ENCODE measurements at regions of chr11 and their contacts with region 1.

Region 1: GRCh38 chr11:44936525-44936924 is 14.2 kb downstream of the TP53I11 start:
- ATAC-seq: peak; percentile 27 to 81 (median 70)
- H3K4me3 ChIP-seq: no peak overlapping the region
- H3K27ac ChIP-seq: no peak overlapping the region
- H3K4me1 ChIP-seq: peaks cover 18 to 25% of the 10 kb centered on the region in 2 donors

Region 2: GRCh38 chr11:44565211-44565952 is 371.1 kb before region 1 on chr11 and contains the start of gene CD82:
- in situ Hi-C with region 1: no loop called
- ATAC-seq: peak; percentile 83 to 96 (median 94)
- H3K4me3 ChIP-seq: peak within 1 kb of the TSS; percentile 32 to 42 (median 36)
- H3K27ac ChIP-seq: peak within 1 kb of the TSS in 1 of 2 donors; percentile 0
- H3K4me1 ChIP-seq: peaks cover 5 to 15% of the 10 kb centered on the region in 2 donors
- total RNA-seq, gene CD82: 1.3 to 58.4 (median 4.1) TPM

Region 3: DNA sequence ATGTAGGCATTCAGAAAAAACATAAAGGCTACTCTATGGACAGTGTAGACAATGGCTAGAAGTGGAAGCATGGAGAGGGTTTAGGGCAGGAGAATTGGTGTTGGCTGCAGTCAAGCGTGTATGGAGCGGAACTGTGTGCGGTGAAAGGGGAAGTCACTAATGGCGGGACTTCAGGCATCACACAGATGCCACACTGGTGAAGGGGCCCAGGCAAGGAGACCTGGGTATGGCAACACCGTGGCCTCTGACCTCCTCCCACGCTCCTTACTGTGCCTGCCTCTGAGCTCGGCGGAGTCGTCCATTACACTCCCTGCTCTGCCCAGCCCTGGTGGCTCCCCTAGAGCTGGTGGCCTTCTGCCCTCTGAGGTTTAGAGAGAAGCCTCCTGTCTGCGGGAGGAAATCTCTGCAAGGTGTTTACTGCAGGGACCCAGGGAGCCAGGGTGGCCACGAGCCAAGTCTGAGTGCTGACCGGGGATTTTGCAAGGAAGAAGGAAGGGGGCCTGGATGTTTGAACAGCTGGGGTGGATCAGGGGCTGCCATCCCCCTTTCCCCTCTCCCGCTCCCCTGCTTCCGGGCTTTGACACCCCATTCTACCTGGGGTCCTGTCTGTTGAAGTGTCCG is 284.9 kb before region 1 on chr11:
- in situ Hi-C with region 1: no loop called
- ATAC-seq: no peak
- H3K4me3 ChIP-seq: no peak overlapping the region
- H3K27ac ChIP-seq: no peak overlapping the region
- H3K4me1 ChIP-seq: no peaks in the 10 kb centered on the region

Region 4: GRCh38 chr11:45102810-45103621 is 166.5 kb after region 1 on chr11:
- in situ Hi-C with region 1: loop called (anchors 5 to 10 kb)
- ATAC-seq: peak; percentile 11 to 55 (median 27)
- H3K4me3 ChIP-seq: no peak overlapping the region
- H3K27ac ChIP-seq: no peak overlapping the region
- H3K4me1 ChIP-seq: peaks cover 6 to 12% of the 10 kb centered on the region in 2 donors

Region 5: DNA sequence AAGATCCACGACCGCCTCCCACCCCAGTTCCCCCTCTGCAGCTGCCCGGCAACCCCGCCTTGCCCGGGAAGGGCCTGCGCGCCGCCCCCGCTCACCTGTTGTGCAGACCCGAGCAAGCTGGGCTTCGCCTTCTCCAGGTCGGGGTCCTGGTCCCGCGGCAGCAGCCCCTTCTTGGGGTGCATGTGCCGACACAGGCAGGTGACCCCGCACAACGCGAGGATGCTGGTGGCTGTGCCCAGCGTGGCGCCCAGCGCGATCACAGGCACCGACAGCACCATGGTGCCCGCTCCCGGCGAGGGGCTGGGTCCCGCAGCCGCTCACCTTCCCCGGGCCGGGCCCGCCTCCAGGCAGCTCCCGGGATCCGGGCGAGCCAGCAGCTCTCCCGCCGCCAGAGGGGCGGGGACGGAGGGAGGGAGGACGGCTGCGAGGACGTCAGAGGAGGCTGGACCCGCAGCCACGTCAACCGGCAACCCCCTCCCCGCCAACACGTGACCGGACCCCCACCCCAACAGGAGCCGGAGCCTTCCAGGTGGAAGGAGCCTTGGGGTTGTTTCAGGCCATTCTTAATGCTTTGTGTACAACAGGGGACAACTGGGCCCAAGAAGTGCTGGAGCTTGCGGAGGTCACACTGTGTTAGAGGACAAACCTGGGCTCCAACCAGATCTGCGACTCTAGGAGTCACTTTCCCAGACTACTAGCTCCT is 349.6 kb after region 1 on chr11 and contains the start of gene SYT13:
- in situ Hi-C with region 1: loop called in 4 of 9 experiments (anchors 25 kb)
- ATAC-seq: peak; percentile 68 to 94 (median 91)
- H3K4me3 ChIP-seq: peak within 1 kb of the TSS; percentile 61 to 94 (median 78)
- H3K27ac ChIP-seq: peak within 1 kb of the TSS; percentile 51 to 81
- H3K4me1 ChIP-seq: peaks cover 39 to 70% of the 10 kb centered on the region in 2 donors
- total RNA-seq, gene SYT13: 9.1 to 54.7 (median 44.8) TPM in 5 of 8 experiments, not detected in the others

Region 6: DNA sequence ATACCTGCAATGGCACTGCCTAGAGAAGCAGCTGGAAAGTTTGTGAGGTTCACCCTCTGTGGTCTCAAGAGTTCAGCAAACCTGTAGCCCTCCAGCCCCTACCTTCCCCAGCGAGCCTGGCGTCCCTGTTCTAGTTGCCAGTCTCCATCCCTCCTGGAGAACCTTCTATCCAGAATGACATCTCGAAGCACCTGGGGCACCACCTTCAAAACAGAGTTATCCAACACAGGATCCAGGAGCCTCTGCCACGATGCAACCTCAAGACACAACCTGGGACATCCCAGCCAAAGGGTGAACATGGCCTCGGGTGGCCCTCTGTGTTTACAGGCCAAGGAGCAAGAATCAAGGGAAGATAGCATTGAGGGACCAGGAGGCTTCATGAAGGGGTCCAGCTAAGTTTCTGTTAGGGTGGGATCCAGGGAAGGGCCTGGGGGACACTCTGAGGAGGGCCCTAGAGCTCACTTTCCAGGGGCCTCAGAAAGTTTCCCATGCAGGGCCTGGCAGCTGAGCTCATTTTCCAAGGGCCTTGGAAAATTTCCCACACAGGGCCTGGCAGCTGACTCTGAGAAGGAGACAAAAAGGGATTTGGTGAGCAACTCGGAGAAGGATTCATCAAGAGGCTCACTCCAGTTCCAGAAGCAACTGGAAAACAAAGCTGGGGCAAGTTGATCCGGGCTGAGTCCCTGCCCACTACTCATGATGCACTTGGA is 386.5 kb after region 1 on chr11:
- in situ Hi-C with region 1: loop called in 5 of 9 experiments (anchors 10 to 25 kb)
- ATAC-seq: no peak
- H3K4me3 ChIP-seq: no peak overlapping the region
- H3K27ac ChIP-seq: no peak overlapping the region
- H3K4me1 ChIP-seq: no peaks in the 10 kb centered on the region

Region 7: GRCh38 chr11:45339729-45340519 is 403.4 kb after region 1 on chr11:
- in situ Hi-C with region 1: loop called in 2 of 9 experiments (anchors 25 kb)
- ATAC-seq: peak; percentile 83 to 99 (median 96)
- H3K4me3 ChIP-seq: peak overlapping the region in 1 of 5 donors; percentile 8
- H3K27ac ChIP-seq: no peak overlapping the region
- H3K4me1 ChIP-seq: peaks cover 31 to 52% of the 10 kb centered on the region in 2 donors